ENCODE measurements at regions of chrX and their contacts with region 1.

Region 1: DNA sequence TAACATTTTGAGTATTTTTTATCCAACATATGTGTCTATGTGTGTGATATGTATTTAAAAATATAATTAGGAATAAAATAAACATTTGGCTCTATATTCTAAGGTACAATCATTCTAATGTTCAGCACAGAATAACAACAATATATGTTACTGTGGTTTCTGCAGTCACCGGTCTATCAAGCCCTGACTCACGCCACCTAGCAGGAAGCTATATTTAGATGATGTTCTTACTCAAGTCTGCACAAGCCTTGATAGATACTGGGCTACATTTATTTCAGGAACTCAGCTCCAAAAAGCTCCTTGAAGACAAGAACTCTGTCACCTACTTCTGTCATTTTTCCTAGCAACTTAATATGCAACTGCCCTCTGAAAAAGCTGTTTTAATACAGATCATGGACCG is 152.0 kb upstream of the FTHL17 start:
- DNase-seq: peak; percentile 36
- H3K4me3 ChIP-seq: no peak overlapping the region
- H3K27ac ChIP-seq: peak overlapping the region; percentile 48
- H3K4me1 ChIP-seq: peaks cover 20% of the 10 kb centered on the region
- H3K27me3 ChIP-seq: no peaks in the 10 kb centered on the region
- CTCF ChIP-seq: no peak
- POLR2A ChIP-seq: no peak

Region 2: DNA sequence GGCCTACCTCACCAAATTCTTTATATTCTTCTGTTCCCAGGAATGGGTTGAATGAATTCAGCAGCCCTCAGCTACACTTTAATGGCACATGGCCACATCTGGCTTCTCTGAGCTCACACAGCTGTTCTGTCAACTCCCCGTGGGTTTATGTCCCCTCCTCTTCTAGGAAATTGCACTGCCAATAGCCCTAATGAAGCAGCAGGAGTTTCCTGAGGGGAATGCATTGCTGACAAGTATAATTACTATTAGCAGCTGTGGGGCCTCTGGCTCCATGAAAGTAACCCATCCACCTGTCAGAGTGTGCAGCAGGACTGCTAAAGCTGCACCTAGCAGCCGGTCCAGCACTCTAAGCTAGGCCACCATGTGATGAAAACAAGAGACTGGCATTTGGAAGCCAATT is 202.3 kb before region 1 on chrX:
- CTCF ChIA-PET with region 1: no interaction called
- POLR2A ChIA-PET with region 1: no interaction called
- dilution Hi-C with region 1: no loop called
- intact Hi-C with region 1: no loop called
- DNase-seq: no peak
- H3K4me3 ChIP-seq: no peak overlapping the region
- H3K27ac ChIP-seq: no peak overlapping the region
- H3K4me1 ChIP-seq: no peaks in the 10 kb centered on the region
- H3K27me3 ChIP-seq: no peaks in the 10 kb centered on the region
- CTCF ChIP-seq: no peak
- POLR2A ChIP-seq: no peak

Region 3: DNA sequence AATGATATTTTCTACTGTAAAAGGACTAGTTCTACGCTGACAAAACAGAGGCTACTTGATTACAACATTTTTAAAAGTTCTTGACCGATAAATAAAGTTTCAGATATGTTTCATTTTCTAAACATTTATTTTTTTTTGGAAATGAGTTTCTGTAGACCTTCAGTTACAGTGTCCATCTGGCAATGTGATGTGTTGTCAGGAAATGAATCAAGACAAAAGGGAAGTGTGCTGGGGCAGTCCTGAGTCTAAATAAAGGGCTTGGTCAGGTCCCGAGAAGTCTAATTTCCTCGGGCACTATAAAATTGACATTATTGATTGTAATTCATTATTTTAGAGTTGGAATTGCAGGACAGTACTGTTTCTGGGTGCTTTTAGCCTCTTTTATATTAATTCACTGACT is 95.0 kb before region 1 on chrX:
- CTCF ChIA-PET with region 1: no interaction called
- POLR2A ChIA-PET with region 1: no interaction called
- dilution Hi-C with region 1: no loop called
- intact Hi-C with region 1: loop called (anchors 1 kb)
- DNase-seq: peak; percentile 53
- H3K4me3 ChIP-seq: peak overlapping the region in 1 of 3 experiments; percentile 17
- H3K27ac ChIP-seq: peak overlapping the region; percentile 51
- H3K4me1 ChIP-seq: peaks cover 9% of the 10 kb centered on the region
- H3K27me3 ChIP-seq: no peaks in the 10 kb centered on the region
- CTCF ChIP-seq: no peak
- POLR2A ChIP-seq: no peak

Region 4: DNA sequence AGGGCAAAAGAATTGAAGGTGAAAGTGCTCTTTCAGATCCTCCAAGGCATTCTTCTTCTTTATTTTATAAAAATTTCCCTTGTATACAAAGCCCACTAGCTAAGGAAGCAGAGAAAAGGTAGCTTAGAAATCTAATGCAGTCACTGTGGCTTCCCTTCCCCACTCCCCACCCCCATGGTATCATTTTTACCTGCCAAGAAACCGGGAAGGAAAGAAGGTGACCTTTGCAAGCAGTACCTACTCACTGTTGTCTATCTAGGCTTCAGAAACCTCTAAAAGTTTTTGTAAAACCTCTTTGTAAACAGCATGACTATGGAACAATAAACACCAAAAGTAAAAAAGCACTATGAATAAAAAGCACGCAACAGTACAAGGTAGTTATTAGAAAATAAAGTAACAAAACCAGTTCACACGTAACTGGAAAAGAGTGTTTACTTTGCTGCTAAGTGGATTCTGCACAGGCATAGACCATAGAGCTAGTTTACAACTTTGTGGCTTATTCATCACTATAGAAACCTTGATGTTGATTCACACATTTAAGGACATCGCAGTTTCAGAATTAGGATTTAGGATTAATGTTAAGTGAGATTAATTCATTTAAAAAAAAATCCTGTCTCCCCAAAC is 42.3 kb before region 1 on chrX:
- CTCF ChIA-PET with region 1: no interaction called
- POLR2A ChIA-PET with region 1: no interaction called
- dilution Hi-C with region 1: no loop called
- intact Hi-C with region 1: no loop called
- DNase-seq: no peak
- H3K4me3 ChIP-seq: no peak overlapping the region
- H3K27ac ChIP-seq: no peak overlapping the region
- H3K4me1 ChIP-seq: no peaks in the 10 kb centered on the region
- H3K27me3 ChIP-seq: no peaks in the 10 kb centered on the region
- CTCF ChIP-seq: no peak
- POLR2A ChIP-seq: no peak

Region 5: DNA sequence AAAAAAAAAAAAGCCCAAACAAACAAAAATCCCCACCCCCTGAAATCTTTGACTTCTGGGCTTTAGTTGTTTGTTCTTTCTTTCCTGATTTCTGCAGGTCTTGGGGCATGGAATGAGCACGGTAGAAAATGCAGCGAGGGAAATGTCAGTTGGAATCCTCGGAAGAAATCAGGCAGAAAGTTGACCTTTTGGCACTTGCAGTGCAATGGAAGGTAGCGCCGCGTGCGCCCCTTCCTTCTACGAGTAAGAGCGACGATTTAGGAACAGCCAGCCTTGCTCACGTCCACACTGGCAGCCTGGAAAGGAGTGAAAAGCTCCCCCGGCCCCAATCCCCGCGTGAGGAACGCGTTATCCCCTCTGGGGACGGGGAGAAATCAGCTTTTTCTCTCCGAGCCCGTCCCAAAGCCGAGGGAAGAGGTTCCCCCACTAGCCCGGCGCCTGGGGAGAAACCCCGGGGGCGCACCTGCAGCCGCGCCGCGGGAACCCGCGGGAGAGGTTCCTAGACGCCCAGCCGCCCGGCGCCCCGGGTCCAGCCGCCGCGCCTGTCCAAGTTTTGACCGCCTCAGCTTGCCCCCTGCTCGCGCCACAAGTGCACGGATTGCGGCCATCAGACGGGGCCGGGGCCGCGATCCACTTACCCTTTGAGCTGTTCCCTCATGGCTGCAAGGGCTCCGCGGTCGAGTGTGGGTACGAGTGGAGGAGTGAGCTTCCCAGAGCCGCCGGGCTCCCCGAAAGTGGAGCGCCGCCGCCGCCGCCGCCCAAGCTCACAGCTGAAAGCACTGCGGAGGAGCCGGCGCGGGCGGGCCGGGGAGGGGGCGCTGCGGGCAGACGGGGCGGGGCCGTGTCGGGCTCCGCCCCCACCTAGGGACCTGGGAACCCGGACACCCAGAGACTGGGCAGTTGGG is 42.6 kb after region 1 on chrX:
- CTCF ChIA-PET with region 1: interaction called, 3 read pairs
- POLR2A ChIA-PET with region 1: no interaction called
- dilution Hi-C with region 1: no loop called
- intact Hi-C with region 1: loop called (anchors 1 kb)
- DNase-seq: peak; percentile 53
- H3K4me3 ChIP-seq: peak overlapping the region; percentile 57 to 81 (median 74)
- H3K27ac ChIP-seq: peak overlapping the region; percentile 37
- H3K4me1 ChIP-seq: no peaks in the 10 kb centered on the region
- H3K27me3 ChIP-seq: no peaks in the 10 kb centered on the region
- CTCF ChIP-seq: no peak
- POLR2A ChIP-seq: no peak

Region 6: DNA sequence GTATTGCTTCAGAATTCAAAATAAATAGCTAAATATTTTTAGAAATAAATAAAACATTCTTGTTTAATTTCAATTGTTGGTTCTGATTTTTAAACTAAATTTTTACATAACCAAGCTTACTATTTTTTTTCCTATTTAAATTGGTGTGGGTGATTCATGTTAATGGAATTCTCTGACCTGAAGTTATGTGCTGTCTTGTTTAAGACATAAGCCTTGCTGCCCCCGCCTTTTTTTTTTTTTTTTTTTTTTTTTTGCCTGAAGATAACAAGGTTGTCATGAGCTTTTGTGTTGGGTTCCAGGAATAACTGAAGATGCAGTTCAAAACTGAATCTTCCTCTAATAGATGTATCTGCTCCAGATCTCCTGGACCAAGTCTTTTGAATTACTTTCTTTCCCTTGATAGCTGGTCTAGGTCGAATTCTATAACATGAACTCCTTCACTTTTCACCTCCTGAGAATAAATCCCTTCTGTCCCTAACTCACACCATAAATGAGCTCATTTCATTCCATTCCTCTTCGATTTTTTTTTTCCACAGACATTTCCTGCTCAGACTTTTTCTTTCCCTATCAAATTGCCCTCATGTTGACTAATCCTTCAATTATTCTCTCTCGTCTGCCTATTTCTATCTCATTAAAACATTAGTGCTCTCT is 109.5 kb after region 1 on chrX:
- CTCF ChIA-PET with region 1: no interaction called
- POLR2A ChIA-PET with region 1: no interaction called
- dilution Hi-C with region 1: no loop called
- intact Hi-C with region 1: loop called (anchors 5 kb)
- DNase-seq: peak; percentile 60
- H3K4me3 ChIP-seq: no peak overlapping the region
- H3K27ac ChIP-seq: peak overlapping the region; percentile 55
- H3K4me1 ChIP-seq: no peaks in the 10 kb centered on the region
- H3K27me3 ChIP-seq: no peaks in the 10 kb centered on the region
- CTCF ChIP-seq: no peak
- POLR2A ChIP-seq: no peak

Region 7: GRCh38 chrX:31499109-31499508 is 275.3 kb after region 1 on chrX:
- CTCF ChIA-PET with region 1: no interaction called
- POLR2A ChIA-PET with region 1: no interaction called
- dilution Hi-C with region 1: no loop called
- intact Hi-C with region 1: loop called (anchors 1 kb)
- DNase-seq: peak; percentile 85
- H3K4me3 ChIP-seq: no peak overlapping the region
- H3K27ac ChIP-seq: peak overlapping the region; percentile 53
- H3K4me1 ChIP-seq: peaks cover 22% of the 10 kb centered on the region
- H3K27me3 ChIP-seq: no peaks in the 10 kb centered on the region
- CTCF ChIP-seq: no peak
- POLR2A ChIP-seq: peak; percentile 41